ENCODE measurements at regions of chr13 and their contacts with region 1.

Region 1: GRCh38 chr13:98765996-98766519 is 13.6 kb upstream of the SLC15A1 start:
- DNase-seq: no peak
- H3K4me3 ChIP-seq: no peak overlapping the region
- H3K27ac ChIP-seq: no peak overlapping the region
- H3K4me1 ChIP-seq: no peaks in the 10 kb centered on the region
- H3K27me3 ChIP-seq: no peaks in the 10 kb centered on the region
- CTCF ChIP-seq: no peak

Region 2: DNA sequence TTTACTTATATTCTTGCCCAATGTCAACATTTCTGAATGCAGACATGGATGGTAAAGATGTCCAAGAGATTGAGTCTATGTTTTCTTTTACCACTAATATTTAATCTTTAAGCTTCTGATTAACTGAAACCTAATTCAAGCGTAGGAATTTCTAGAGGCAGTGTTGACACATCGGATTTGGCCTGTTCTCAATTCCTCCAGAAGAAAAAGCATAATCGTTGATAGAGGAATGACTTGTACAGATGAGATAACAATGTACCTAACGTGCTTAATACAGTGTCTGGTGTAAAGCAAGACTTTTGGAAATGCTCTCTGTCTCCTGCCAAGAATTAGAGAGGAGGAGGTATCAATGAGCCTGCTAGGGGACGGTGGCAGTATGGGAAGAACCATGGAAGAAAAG is 48.8 kb before region 1 on chr13:
- CTCF ChIA-PET with region 1: no interaction called
- dilution Hi-C with region 1: loop called (anchors 5 kb)
- in situ Hi-C with region 1: no loop called
- intact Hi-C with region 1: no loop called
- DNase-seq: no peak
- H3K4me3 ChIP-seq: no peak overlapping the region
- H3K27ac ChIP-seq: no peak overlapping the region
- H3K4me1 ChIP-seq: no peaks in the 10 kb centered on the region
- H3K27me3 ChIP-seq: no peaks in the 10 kb centered on the region
- CTCF ChIP-seq: no peak